Activated CD8-positive, alpha-beta memory T cell treated with anti-CD3 and anti-CD28 coated beads, Interleukin-2, amount 10 ng/mL, durations not matched to agents 7 days and 5 days (primary cell): ENCODE measurements at regions of chr6 and their contacts with region 1.

Region 1: GRCh38 chr6:56595490-56596122 is 47.1 kb downstream of the DST start:
- DNase-seq: peak; percentile 59
- ATAC-seq: peak; percentile 77
- H3K4me3 Mint-ChIP-seq: no peak overlapping the region
- H3K27ac Mint-ChIP-seq: no peak overlapping the region
- H3K4me1 Mint-ChIP-seq: peaks cover 19% of the 10 kb centered on the region
- H3K27me3 Mint-ChIP-seq: peaks cover 5% of the 10 kb centered on the region

Region 2: GRCh38 chr6:56542364-56543331 is 53.0 kb before region 1 on chr6:
- CTCF ChIA-PET with region 1: interaction called, 11 read pairs
- DNase-seq: peak; percentile 76
- ATAC-seq: peak; percentile 96
- H3K4me3 Mint-ChIP-seq: no peak overlapping the region
- H3K27ac Mint-ChIP-seq: no peak overlapping the region
- H3K4me1 Mint-ChIP-seq: no peaks in the 10 kb centered on the region
- H3K27me3 Mint-ChIP-seq: peaks cover 10% of the 10 kb centered on the region

Region 3: DNA sequence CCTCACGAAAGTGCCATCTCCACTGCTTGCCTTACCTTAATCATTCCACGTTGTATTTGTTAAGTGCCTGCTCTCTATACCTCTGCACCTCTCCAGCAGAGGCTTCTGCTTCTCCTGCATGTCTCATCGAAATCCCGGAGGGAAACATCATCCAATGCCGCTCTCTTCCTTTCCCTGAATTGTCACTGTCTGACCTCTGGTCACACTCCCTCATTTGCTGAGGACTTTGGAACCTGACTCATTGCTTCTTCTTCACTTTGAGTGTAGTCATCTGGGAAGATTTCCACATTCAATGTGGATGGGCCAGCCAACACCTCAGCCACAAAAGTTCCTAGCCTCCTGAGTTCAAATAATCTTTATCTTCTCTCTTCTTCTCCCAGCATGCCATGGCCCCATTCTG is 280.4 kb after region 1 on chr6:
- CTCF ChIA-PET with region 1: no interaction called
- DNase-seq: no peak
- ATAC-seq: no peak
- H3K4me3 Mint-ChIP-seq: no peak overlapping the region
- H3K27ac Mint-ChIP-seq: no peak overlapping the region
- H3K4me1 Mint-ChIP-seq: no peaks in the 10 kb centered on the region
- H3K27me3 Mint-ChIP-seq: peaks cover 30% of the 10 kb centered on the region